Activated naive CD4-positive, alpha-beta T cell treated with anti-CD3 and anti-CD28 coated beads, Interleukin-2, amount 10 ng/mL, durations not matched to agents 7 days and 5 days (primary cell): ENCODE measurements at regions of chr11 and their contacts with region 1.

Region 1: GRCh38 chr11:46295312-46296058 is 18.0 kb downstream of the CREB3L1 start:
- DNase-seq: peak; percentile 86
- H3K4me3 Mint-ChIP-seq: peak overlapping the region; percentile 78
- H3K27ac Mint-ChIP-seq: no peak overlapping the region
- H3K4me1 Mint-ChIP-seq: peaks cover 10% of the 10 kb centered on the region
- H3K27me3 Mint-ChIP-seq: peaks cover 78% of the 10 kb centered on the region

Region 2: DNA sequence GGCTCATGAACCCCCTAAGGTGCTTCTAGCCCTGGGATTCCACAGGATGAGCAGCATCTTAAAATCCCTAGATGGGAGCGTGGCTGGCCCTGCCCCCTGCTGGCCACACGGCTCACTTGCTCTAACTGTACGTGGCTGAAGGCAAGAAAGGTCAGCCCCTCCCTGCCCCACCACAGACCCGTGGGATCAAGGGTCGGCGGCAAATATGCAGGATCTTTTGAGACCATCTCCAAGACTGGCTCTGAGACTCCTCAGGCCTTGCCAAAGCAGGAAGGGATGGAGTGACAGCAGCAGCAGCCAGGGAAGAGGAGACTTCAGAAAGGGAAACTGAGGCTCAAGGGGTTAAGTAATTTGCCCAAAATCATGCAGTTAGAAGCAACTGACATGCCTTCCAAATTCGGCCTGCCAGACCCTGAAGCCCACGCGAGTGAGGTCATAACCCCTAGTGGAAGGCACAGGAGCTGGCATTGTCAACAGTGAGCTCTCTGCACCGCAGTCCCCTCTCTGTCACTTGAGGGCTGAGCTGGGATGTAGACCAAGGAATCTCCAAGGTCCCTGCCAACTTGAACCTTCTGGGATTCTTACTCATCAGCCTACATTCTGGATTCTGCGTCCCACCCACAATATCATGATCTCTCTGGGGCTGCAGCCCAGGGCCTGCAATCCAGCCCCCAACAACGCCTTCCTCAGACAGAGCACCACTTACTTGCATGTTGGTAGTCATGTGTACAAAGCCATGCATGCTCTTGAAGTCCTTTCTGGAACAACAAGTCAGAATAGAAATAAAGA is 13.3 kb after region 1 on chr11:
- CTCF ChIA-PET with region 1: interaction called, 26 read pairs
- DNase-seq: peak; percentile 78
- H3K4me3 Mint-ChIP-seq: no peak overlapping the region
- H3K27ac Mint-ChIP-seq: no peak overlapping the region
- H3K4me1 Mint-ChIP-seq: peaks cover 20% of the 10 kb centered on the region
- H3K27me3 Mint-ChIP-seq: peaks cover 24% of the 10 kb centered on the region

Region 3: DNA sequence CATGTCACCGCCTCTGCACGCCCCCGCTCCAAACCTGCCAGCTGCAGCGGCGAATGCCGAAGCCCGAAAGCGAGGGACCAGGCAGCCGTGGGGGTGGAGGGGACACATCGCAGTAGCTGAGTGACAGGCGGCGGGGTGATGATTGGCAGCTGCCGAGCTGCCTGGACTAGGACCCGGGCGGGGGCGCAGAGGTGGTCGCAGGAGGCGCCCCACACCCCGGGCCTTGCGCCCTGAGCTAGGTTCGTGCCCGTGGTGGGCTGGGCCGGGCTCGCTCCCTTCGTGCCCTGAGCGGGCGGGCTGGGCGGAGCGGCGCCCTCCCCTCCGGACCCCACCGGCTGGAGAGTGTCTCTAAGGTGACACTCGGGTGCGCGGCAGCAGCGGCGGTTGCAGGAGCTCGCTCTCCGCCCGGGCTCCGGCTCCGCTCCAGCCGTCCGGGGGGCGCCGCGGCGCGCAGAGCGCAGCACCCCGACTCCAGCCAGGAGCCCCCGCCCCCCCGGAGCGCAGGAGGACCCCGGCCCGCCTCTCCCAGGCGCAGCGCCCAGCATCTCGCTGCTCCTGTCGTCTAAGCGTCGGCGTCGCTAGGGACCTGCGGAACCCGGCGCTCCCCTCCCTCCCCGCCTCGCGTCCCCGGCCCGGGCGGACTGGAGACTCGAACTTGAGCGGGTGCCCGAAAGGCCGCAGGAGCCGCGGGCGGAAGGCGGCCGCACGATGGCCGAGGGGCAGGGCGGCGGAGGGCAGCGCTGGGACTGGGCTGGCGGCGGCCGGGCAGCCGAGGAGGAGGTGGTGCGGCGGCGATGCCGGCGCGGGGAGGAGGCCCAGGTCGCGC is 37.3 kb after region 1 on chr11:
- CTCF ChIA-PET with region 1: no interaction called
- DNase-seq: peak; percentile 47
- H3K4me3 Mint-ChIP-seq: peak overlapping the region; percentile 75
- H3K27ac Mint-ChIP-seq: no peak overlapping the region
- H3K4me1 Mint-ChIP-seq: peaks cover 74% of the 10 kb centered on the region
- H3K27me3 Mint-ChIP-seq: peaks cover 86% of the 10 kb centered on the region

Region 4: GRCh38 chr11:46345131-46345597 is 49.7 kb after region 1 on chr11:
- CTCF ChIA-PET with region 1: no interaction called
- DNase-seq: peak; percentile 60
- H3K4me3 Mint-ChIP-seq: peak overlapping the region; percentile 84
- H3K27ac Mint-ChIP-seq: peak overlapping the region; percentile 82
- H3K4me1 Mint-ChIP-seq: peaks cover 75% of the 10 kb centered on the region
- H3K27me3 Mint-ChIP-seq: no peaks in the 10 kb centered on the region

Region 5: DNA sequence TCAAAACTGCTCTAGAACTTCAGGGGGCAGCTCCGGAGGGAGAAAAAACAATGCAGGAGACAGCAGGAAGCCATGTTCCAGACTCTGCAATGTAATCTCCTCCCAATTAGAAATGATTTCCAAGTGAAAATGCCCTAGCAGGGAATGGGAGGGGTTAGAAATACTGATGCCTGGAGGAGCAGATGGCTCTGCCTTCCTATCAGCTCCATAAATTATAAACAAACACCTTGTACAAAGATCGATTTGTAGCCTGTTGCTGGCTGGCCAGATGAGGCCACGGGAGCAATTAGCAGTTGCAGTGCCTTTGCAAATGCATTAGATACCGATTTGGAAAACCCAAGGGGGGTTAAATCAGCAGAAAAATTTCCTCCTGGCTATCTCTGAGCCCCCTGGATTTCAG is 142.7 kb after region 1 on chr11:
- CTCF ChIA-PET with region 1: no interaction called
- DNase-seq: no peak
- H3K4me3 Mint-ChIP-seq: no peak overlapping the region
- H3K27ac Mint-ChIP-seq: no peak overlapping the region
- H3K4me1 Mint-ChIP-seq: no peaks in the 10 kb centered on the region
- H3K27me3 Mint-ChIP-seq: no peaks in the 10 kb centered on the region